ENCODE measurements at regions of chr22 and their contacts with region 1.

Region 1: GRCh38 chr22:50271519-50271970 is 1.4 kb upstream of the MAPK11 start:
- DNase-seq: peak; percentile 88
- H3K4me3 ChIP-seq: peak overlapping the region; percentile 32 to 77 (median 55)
- H3K27ac ChIP-seq: peak overlapping the region in 5 of 8 donors; percentile 36 to 78 (median 65)
- H3K4me1 ChIP-seq: peaks cover 18 to 86% (median 65%) of the 10 kb centered on the region in 6 donors
- H3K27me3 ChIP-seq: peaks cover 0 to 63% (median 18%) of the 10 kb centered on the region in 7 donors
- CTCF ChIP-seq: peak in 4 of 11 experiments; percentile 15 to 40 (median 38)
- POLR2A ChIP-seq: no peak

Region 2: GRCh38 chr22:50326959-50327710 is 55.6 kb after region 1 on chr22 and contains the start of gene DENND6B:
- intact Hi-C with region 1: loop called (anchors 5 kb)
- DNase-seq: peak; percentile 95
- H3K4me3 ChIP-seq: peak within 1 kb of the TSS; percentile 54 to 82 (median 66)
- H3K27ac ChIP-seq: peak within 1 kb of the TSS; percentile 89 to 96 (median 92)
- H3K4me1 ChIP-seq: peaks cover 0 to 28% (median 20%) of the 10 kb centered on the region in 6 donors
- H3K27me3 ChIP-seq: no peaks in the 10 kb centered on the region
- CTCF ChIP-seq: peak in 10 of 11 experiments; percentile 18 to 84 (median 66)
- POLR2A ChIP-seq: peak in 1 of 3 donors; percentile 19
- total RNA-seq, gene DENND6B: 4.5 to 8.9 (median 6.0) TPM

Measured in spleen (tissue), 13 donors.